ENCODE measurements at regions of chr14 and their contacts with region 1.

Region 1: DNA sequence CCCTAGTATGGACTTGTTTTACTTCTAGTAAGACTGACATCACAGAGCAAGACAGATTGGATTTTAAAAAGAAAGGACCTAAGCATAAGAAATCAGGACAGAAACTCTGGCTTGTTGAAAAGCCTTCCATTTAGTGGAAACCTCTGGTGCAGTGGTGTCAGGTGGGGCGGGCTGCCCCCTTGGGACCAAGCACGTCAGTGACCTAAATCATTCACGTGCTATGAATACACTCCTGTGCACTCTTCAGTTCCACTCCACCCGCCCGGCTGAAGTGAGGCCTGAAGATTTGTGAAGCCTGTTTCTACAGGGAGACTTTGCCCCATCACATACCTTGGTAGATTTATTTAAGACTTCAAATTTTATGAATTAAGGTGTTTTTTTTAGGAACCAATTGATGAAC is 58.2 kb upstream of the STRN3 start:
- DNase-seq: no peak
- ATAC-seq: no peak
- H3K4me3 ChIP-seq: no peak overlapping the region
- H3K4me3 Mint-ChIP-seq: no peak overlapping the region
- H3K27ac ChIP-seq: no peak overlapping the region
- H3K27ac Mint-ChIP-seq: no peak overlapping the region
- H3K4me1 ChIP-seq: no peaks in the 10 kb centered on the region
- H3K4me1 Mint-ChIP-seq: no peaks in the 10 kb centered on the region
- H3K27me3 ChIP-seq: no peaks in the 10 kb centered on the region
- H3K27me3 Mint-ChIP-seq: no peaks in the 10 kb centered on the region

Region 2: GRCh38 chr14:30874120-30874998 is 210.0 kb before region 1 on chr14 and contains the start of gene COCH:
- CTCF ChIA-PET with region 1: no interaction called
- POLR2A ChIA-PET with region 1: no interaction called
- intact Hi-C with region 1: loop called in 1 of 2 experiments (anchors 10 kb)
- DNase-seq: peak in 7 of 9 donors; percentile 4 to 54 (median 13)
- ATAC-seq: peak; percentile 71
- H3K4me3 ChIP-seq: peak within 1 kb of the TSS; percentile 39
- H3K4me3 Mint-ChIP-seq: peak within 1 kb of the TSS; percentile 66 to 86 (median 78)
- H3K27ac ChIP-seq: no peak within 1 kb of the TSS
- H3K27ac Mint-ChIP-seq: no peak within 1 kb of the TSS
- H3K4me1 ChIP-seq: peaks cover 0 to 5% of the 10 kb centered on the region in 2 donors
- H3K4me1 Mint-ChIP-seq: peaks cover 0 to 15% (median 10%) of the 10 kb centered on the region in 7 donors
- H3K27me3 ChIP-seq: peaks cover 0 to 9% of the 10 kb centered on the region in 2 donors
- H3K27me3 Mint-ChIP-seq: peaks cover 56 to 80% (median 61%) of the 10 kb centered on the region in 5 donors
- total RNA-seq, gene COCH: 0.21 to 1.6 (median 0.24) TPM in 3 of 5 experiments, not detected in the others

Region 3: GRCh38 chr14:30980980-30981379 is 103.4 kb before region 1 on chr14:
- CTCF ChIA-PET with region 1: interaction called, 20 read pairs
- POLR2A ChIA-PET with region 1: no interaction called
- intact Hi-C with region 1: loop called (anchors 1 kb)
- DNase-seq: no peak
- ATAC-seq: no peak
- H3K4me3 ChIP-seq: no peak overlapping the region
- H3K4me3 Mint-ChIP-seq: no peak overlapping the region
- H3K27ac ChIP-seq: no peak overlapping the region
- H3K27ac Mint-ChIP-seq: peak overlapping the region in 7 of 9 donors; percentile 19 to 74 (median 50)
- H3K4me1 ChIP-seq: no peaks in the 10 kb centered on the region
- H3K4me1 Mint-ChIP-seq: peaks cover 7 to 40% (median 32%) of the 10 kb centered on the region in 7 donors
- H3K27me3 ChIP-seq: no peaks in the 10 kb centered on the region
- H3K27me3 Mint-ChIP-seq: no peaks in the 10 kb centered on the region

Region 4: GRCh38 chr14:31047503-31047902 is 36.9 kb before region 1 on chr14:
- CTCF ChIA-PET with region 1: no interaction called
- POLR2A ChIA-PET with region 1: no interaction called
- intact Hi-C with region 1: no loop called
- DNase-seq: no peak
- ATAC-seq: no peak
- H3K4me3 ChIP-seq: no peak overlapping the region
- H3K4me3 Mint-ChIP-seq: no peak overlapping the region
- H3K27ac ChIP-seq: no peak overlapping the region
- H3K27ac Mint-ChIP-seq: no peak overlapping the region
- H3K4me1 ChIP-seq: no peaks in the 10 kb centered on the region
- H3K4me1 Mint-ChIP-seq: peaks cover 0 to 16% (median 4%) of the 10 kb centered on the region in 7 donors
- H3K27me3 ChIP-seq: no peaks in the 10 kb centered on the region
- H3K27me3 Mint-ChIP-seq: no peaks in the 10 kb centered on the region